ENCODE measurements at regions of chr14 and their contacts with region 1.

Region 1: DNA sequence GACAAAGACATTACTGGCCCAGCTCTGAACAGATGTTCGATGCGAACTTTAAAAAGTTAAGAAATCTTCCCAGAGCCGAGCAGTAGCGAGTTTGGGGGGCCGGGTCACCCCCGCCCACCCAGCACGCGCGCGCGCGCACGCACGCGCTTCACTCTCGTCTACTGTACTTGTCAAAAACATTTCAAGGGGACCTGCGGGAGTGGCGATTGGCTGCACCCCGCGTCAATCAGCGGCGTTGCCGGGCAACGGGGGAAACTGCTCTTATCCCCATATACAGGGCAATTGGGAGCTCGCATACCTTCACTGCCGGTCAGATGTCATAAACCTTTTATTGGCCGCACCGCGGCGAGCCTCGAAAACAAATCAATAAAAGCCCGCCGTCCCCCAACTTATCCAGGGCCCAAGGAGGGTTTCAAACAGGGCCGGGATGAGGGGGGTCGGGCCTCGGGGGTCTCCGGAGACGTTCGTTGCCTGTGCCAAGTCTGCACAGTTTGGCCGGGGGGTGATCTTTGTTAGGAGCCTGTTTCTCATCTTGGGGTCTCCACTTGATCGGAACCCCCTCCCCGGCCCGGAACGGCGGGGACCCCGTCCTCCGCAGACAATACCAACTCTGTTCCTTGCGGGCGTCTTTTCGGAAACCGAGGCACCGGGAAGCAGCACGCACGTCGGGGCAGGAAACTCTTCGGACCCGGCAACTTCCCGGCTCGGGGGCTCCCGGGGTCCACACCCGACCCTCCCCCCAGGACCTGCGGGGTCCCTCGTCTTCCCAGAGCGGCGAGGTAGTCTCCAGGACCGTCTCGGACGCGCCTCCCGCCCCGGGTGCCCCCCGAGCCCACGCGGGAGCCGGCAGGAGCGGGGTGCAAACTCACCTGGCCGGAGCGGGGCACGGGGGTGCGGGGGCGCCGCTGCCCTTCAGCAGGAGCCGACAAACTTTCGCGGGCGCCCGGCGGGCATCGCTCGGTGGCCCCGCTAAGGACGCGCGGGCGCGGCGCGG is 734 bp downstream of the FOXN3 start:
- DNase-seq: peak; percentile 99
- H3K4me3 ChIP-seq: peak overlapping the region; percentile 55 to 78 (median 68)
- H3K27ac ChIP-seq: peak overlapping the region; percentile 65
- H3K4me1 ChIP-seq: peaks cover 6% of the 10 kb centered on the region
- H3K27me3 ChIP-seq: no peaks in the 10 kb centered on the region
- CTCF ChIP-seq: no peak
- POLR2A ChIP-seq: no peak

Region 2: GRCh38 chr14:89178802-89179535 is 237.3 kb before region 1 on chr14:
- CTCF ChIA-PET with region 1: no interaction called
- POLR2A ChIA-PET with region 1: no interaction called
- dilution Hi-C with region 1: no loop called
- intact Hi-C with region 1: loop called (anchors 1 kb)
- DNase-seq: no peak
- H3K4me3 ChIP-seq: no peak overlapping the region
- H3K27ac ChIP-seq: no peak overlapping the region
- H3K4me1 ChIP-seq: no peaks in the 10 kb centered on the region
- H3K27me3 ChIP-seq: no peaks in the 10 kb centered on the region
- CTCF ChIP-seq: no peak
- POLR2A ChIP-seq: no peak

Region 3: GRCh38 chr14:89303457-89304435 is 112.6 kb before region 1 on chr14:
- CTCF ChIA-PET with region 1: no interaction called
- POLR2A ChIA-PET with region 1: no interaction called
- dilution Hi-C with region 1: no loop called
- intact Hi-C with region 1: loop called (anchors 2 kb)
- DNase-seq: peak; percentile 83
- H3K4me3 ChIP-seq: peak overlapping the region in 1 of 3 experiments; percentile 24
- H3K27ac ChIP-seq: peak overlapping the region; percentile 71
- H3K4me1 ChIP-seq: peaks cover 40% of the 10 kb centered on the region
- H3K27me3 ChIP-seq: no peaks in the 10 kb centered on the region
- CTCF ChIP-seq: no peak
- POLR2A ChIP-seq: no peak

Region 4: GRCh38 chr14:89489761-89490437 is 73.6 kb after region 1 on chr14:
- CTCF ChIA-PET with region 1: no interaction called
- POLR2A ChIA-PET with region 1: no interaction called
- dilution Hi-C with region 1: no loop called
- intact Hi-C with region 1: loop called (anchors 2 kb)
- DNase-seq: no peak
- H3K4me3 ChIP-seq: no peak overlapping the region
- H3K27ac ChIP-seq: no peak overlapping the region
- H3K4me1 ChIP-seq: no peaks in the 10 kb centered on the region
- H3K27me3 ChIP-seq: no peaks in the 10 kb centered on the region
- CTCF ChIP-seq: no peak
- POLR2A ChIP-seq: no peak

Region 5: GRCh38 chr14:89701211-89702043 is 285.1 kb after region 1 on chr14:
- CTCF ChIA-PET with region 1: no interaction called
- POLR2A ChIA-PET with region 1: no interaction called
- dilution Hi-C with region 1: no loop called
- intact Hi-C with region 1: loop called (anchors 2 kb)
- DNase-seq: peak; percentile 35
- H3K4me3 ChIP-seq: peak overlapping the region; percentile 15 to 54 (median 32)
- H3K27ac ChIP-seq: peak overlapping the region; percentile 27
- H3K4me1 ChIP-seq: peaks cover 3% of the 10 kb centered on the region
- H3K27me3 ChIP-seq: no peaks in the 10 kb centered on the region
- CTCF ChIP-seq: no peak
- POLR2A ChIP-seq: no peak

Region 6: GRCh38 chr14:89915114-89915878 is 499.0 kb after region 1 on chr14:
- CTCF ChIA-PET with region 1: no interaction called
- POLR2A ChIA-PET with region 1: no interaction called
- dilution Hi-C with region 1: no loop called
- intact Hi-C with region 1: loop called (anchors 2 kb)
- DNase-seq: peak; percentile 79
- H3K4me3 ChIP-seq: no peak overlapping the region
- H3K27ac ChIP-seq: no peak overlapping the region
- H3K4me1 ChIP-seq: no peaks in the 10 kb centered on the region
- H3K27me3 ChIP-seq: no peaks in the 10 kb centered on the region
- CTCF ChIP-seq: peak; percentile 75
- POLR2A ChIP-seq: no peak